Keratinocyte (primary cell): ENCODE measurements at regions of chr2 and their contacts with region 1.

Region 1: DNA sequence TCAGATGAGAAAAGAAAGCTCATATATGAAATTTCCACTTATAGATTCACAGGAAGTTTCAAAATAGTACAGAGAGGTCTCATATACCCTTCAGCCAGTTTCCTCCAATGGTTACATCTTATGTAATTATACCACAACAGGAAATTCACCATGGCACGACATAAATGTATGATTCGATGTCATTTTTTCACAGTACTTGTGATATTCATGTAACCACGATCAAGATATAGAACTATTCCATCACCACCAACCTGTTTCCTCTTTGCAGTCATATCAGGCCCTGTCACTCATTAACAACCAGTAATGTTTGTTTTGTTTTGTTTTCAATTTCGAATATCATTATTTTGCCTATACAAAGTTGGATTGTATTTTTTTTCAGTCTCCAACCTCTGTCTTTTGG is 314.3 kb upstream of the POU3F3 start:
- DNase-seq: no peak
- H3K4me3 ChIP-seq: no peak overlapping the region
- H3K27ac ChIP-seq: no peak overlapping the region
- H3K4me1 ChIP-seq: no peaks in the 10 kb centered on the region
- H3K27me3 ChIP-seq: no peaks in the 10 kb centered on the region
- CTCF ChIP-seq: no peak

Region 2: DNA sequence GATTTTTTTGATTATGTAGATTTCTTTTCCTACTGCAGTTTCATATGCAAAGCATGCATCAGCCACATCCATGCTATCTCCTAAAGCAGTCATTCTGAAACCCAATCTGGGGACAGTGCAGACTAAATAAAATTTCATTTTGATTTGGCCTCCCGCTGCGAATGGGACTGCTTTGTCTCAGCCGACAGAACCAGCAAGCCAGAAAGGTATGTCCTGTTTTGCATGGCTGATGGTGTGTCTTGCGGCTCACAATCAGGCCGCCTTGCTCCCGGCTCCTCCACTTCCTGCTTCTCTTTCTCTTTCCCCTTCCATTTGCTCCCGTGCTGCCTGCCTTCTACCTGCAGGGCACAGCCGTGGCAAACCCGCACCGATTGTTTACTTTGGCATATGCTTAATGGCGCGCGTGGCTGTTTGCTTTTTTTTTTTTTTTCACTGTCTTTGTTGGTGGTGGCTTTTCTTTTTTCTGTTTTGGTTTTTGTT is 105.3 kb before region 1 on chr2:
- dilution Hi-C with region 1: loop called (anchors 25 kb)
- DNase-seq: no peak
- H3K4me3 ChIP-seq: no peak overlapping the region
- H3K27ac ChIP-seq: no peak overlapping the region
- H3K4me1 ChIP-seq: no peaks in the 10 kb centered on the region
- H3K27me3 ChIP-seq: no peaks in the 10 kb centered on the region
- CTCF ChIP-seq: no peak

Region 3: GRCh38 chr2:104620801-104621200 is 81.2 kb after region 1 on chr2:
- dilution Hi-C with region 1: no loop called
- DNase-seq: no peak
- H3K4me3 ChIP-seq: no peak overlapping the region
- H3K27ac ChIP-seq: no peak overlapping the region
- H3K4me1 ChIP-seq: no peaks in the 10 kb centered on the region
- H3K27me3 ChIP-seq: no peaks in the 10 kb centered on the region
- CTCF ChIP-seq: no peak